ENCODE measurements at regions of chr6 and their contacts with region 1.

Region 1: DNA sequence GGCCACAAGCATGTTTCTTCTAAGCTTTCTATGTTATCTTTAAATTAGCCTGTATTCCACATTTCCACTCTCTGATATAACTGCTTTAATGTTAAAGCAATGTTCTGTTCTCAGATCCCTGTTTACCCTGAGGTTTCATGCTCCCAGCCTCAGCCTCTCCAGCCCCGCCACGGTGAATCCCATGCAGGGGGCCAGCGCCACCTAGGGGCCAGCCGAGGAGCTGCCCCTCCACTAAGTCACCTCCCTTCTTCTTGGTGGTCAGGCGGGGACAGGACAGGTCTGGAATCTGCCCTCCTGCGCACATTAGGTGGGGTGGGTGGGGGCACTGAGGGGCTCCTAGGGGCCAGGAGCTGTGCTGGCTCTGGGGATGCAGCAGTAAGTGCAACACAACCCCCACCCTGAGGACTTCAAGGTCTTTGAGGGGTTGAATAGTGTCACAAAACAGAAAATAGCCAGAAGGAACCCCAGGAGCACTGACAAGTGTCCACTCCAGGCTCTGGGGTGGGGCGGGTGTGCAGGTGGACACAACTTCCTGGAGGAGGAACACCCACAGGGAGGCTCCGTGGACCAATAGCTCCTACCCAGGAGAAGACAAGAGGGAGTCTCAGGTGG is 61.6 kb downstream of the RAB44 start:
- DNase-seq: peak; percentile 89
- H3K4me3 ChIP-seq: no peak overlapping the region
- H3K27ac ChIP-seq: peak overlapping the region; percentile 47
- H3K4me1 ChIP-seq: peaks cover 21% of the 10 kb centered on the region
- H3K27me3 ChIP-seq: no peaks in the 10 kb centered on the region
- CTCF ChIP-seq: peak; percentile 97

Region 2: GRCh38 chr6:36623547-36624459 is 135.5 kb before region 1 on chr6:
- intact Hi-C with region 1: loop called (anchors 2 kb)
- DNase-seq: peak; percentile 98
- H3K4me3 ChIP-seq: no peak overlapping the region
- H3K27ac ChIP-seq: peak overlapping the region; percentile 69
- H3K4me1 ChIP-seq: peaks cover 22% of the 10 kb centered on the region
- H3K27me3 ChIP-seq: no peaks in the 10 kb centered on the region
- CTCF ChIP-seq: peak; percentile 89

Region 3: DNA sequence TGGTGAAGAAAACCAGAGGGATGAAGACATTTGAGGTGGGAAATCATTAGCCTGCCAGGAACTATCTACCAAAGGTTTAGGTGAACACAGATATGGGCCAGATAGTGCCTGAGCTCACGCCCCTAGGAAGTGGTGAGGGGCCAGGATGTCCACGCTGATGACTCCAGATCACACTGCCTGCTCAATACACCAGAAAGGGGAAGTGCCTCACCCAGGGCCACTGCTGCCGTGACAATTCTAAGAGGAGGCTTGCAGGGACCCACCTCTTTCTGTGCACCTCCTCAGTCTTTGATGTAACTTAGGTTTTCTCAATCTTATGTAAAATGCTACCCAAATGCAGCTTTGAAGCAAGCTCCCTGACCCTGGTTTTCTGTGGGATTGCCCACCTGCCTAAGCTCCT is 67.0 kb before region 1 on chr6:
- intact Hi-C with region 1: loop called (anchors 5 kb)
- DNase-seq: no peak
- H3K4me3 ChIP-seq: no peak overlapping the region
- H3K27ac ChIP-seq: no peak overlapping the region
- H3K4me1 ChIP-seq: no peaks in the 10 kb centered on the region
- H3K27me3 ChIP-seq: no peaks in the 10 kb centered on the region
- CTCF ChIP-seq: no peak

Region 4: DNA sequence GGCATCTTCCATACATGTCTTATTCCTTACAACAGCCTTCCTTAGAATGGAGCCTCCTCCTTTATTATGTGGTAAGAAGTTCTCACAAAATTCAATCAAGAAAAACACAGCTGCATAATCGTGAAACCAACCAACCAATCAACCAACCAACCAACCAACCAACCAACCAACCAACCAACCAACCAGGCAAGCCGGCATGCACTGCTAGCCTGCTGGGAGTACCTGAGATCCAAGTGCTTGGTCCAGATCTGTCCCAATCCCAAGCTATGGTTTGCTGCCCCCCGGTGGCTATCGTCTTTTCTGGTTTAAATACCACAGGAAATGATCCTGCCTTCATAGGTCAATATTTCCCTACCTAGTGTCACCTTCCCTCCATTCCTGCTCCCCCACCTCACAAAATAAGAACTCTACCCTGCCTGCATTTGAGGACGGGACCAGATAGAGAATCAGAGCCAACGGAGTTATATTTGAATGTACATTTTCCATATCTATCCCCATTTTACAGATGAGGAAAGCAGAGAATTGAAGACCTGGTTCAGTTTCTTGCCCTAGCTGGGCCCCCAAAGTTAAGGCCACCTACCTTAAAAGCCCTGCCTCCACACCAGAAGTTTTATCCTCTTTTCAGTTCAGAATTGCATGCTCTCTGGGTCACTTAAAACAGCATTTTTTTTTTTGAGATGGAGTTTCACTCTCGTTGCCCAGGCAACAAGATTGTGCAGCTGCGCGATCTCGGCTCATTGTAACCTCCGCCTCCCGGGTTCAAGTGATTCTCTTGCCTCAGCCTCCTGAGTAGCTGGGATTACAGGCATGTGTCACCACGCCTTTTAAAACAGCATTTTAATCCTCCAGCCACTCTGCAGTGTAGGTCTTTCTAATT is 34.5 kb before region 1 on chr6:
- intact Hi-C with region 1: loop called (anchors 2 kb)
- DNase-seq: peak; percentile 92
- H3K4me3 ChIP-seq: no peak overlapping the region
- H3K27ac ChIP-seq: no peak overlapping the region
- H3K4me1 ChIP-seq: no peaks in the 10 kb centered on the region
- H3K27me3 ChIP-seq: no peaks in the 10 kb centered on the region
- CTCF ChIP-seq: peak; percentile 34

Region 5: DNA sequence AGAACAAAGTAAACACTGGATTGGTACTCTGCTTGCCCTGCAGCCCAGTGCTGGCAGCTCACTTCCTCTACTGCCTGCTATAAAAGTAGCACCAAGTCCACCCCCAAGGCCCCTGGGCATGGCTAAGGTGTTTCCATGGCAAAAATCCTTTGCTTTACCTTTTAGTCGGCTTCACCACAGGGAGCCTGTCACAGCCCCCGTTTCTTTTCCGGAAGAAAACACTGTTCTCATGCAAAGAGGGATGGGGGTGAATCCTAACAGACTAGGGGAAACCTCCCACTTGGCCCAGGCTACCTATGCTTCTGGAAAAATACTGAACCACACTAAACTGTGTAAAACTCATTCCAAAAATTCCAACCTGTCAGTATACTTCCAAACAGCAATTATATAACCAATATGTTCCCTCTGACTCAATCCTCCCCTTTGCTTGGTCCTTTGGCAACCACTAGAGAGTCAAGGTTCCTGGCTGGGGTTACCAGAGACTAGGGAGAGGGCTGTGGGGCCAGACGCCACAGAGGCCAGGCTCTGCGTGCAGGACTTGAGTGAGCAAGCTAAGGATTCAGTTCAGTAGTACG is 99.2 kb after region 1 on chr6:
- intact Hi-C with region 1: no loop called
- DNase-seq: no peak
- H3K4me3 ChIP-seq: no peak overlapping the region
- H3K27ac ChIP-seq: no peak overlapping the region
- H3K4me1 ChIP-seq: no peaks in the 10 kb centered on the region
- H3K27me3 ChIP-seq: no peaks in the 10 kb centered on the region
- CTCF ChIP-seq: no peak